Ovary (tissue), 10 donors: ENCODE measurements at regions of chr1 and their contacts with region 1.

Region 1: DNA sequence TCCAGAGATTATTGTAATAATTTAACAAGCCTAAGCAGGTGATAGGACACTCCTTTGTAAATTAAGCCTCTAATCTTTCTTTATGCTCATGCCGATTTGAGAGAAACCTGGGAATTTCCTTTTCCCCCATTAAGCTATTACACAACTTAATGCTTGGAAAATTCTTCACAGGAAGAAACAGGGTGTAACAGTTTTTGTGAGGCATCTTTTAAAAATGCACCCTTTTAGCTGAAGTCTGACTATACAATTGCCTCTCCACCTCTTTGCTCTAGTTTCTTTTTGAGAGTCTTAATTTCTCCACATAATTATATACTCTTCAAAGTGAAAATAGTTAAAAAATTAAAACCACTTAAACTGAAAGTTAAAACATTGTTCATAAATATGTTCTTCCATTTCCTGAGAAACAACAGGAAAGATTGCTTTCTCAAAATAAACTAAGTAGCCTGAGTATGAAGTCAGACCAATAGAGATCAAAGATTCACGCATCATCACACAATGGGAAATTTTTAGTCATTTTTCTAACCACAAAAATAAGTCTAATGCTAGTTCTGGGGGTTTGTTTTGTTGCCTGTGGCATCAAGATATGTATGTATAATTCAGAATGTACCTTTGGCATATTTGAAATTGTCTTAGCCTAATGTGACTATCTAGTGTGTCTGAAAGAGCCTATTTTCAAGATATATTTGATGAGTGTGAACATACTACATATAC is 34.7 kb downstream of the LRRC8D start:
- DNase-seq: no peak
- H3K4me3 ChIP-seq: no peak overlapping the region
- H3K27ac ChIP-seq: no peak overlapping the region
- H3K4me1 ChIP-seq: no peaks in the 10 kb centered on the region
- H3K27me3 ChIP-seq: no peaks in the 10 kb centered on the region
- CTCF ChIP-seq: no peak
- EP300 ChIP-seq: no peak
- POLR2A ChIP-seq: no peak

Region 2: DNA sequence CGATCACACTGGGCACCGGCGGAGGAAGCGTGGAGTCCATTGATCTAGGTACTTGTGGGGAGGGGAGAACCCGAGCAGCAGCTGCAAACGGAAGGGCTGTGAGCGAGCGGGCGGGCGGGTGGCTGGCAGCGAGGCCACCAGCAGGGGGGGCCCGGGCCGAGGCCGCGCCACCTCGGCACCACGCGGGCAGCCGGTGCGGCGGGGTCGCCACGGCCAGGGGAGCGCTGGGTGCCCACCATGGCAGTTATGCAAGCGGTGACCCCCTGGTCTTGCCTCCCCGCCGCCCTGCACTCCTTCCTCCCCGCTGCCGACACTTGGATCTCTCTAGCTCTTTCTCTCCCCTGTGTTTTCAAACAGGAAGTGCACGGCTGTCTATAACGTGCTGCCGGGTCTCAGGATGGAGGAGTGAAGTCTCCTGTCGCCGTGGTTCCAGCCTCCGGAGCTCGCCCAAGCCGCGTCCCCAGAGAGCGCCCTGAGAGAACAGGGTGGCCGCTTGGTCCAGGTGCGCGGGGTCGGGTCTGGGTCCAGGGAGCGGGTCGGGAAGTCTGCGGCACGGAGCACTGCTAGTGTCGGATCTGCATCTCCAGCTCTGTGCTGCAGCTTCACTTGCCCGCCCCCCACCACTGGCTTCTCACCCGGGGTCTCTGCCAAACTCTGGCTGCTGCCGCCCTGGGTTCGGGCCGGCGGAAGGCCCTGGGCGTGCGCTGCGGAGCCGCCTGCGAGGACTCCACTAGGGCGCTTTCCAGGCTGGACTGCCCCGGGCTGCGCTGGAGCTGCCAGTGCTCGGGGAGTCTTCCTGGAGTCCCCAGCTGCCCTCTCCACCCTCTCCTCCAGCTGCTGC is 12.1 kb before region 1 on chr1:
- intact Hi-C with region 1: loop called in 1 of 4 experiments (anchors 2 kb)
- DNase-seq: peak; percentile 50 to 71 (median 59)
- H3K4me3 ChIP-seq: peak overlapping the region; percentile 85
- H3K27ac ChIP-seq: peak overlapping the region; percentile 28 to 67
- H3K4me1 ChIP-seq: peaks cover 3% of the 10 kb centered on the region
- H3K27me3 ChIP-seq: no peaks in the 10 kb centered on the region
- CTCF ChIP-seq: peak in 2 of 3 donors; percentile 40 to 65
- EP300 ChIP-seq: no peak
- POLR2A ChIP-seq: no peak